ENCODE measurements at regions of chr3 and their contacts with region 1.

Region 1: GRCh38 chr3:71744738-71745137 is 8.9 kb upstream of the GPR27 start:
- DNase-seq: no peak
- H3K4me3 ChIP-seq: no peak overlapping the region
- H3K27ac ChIP-seq: no peak overlapping the region
- H3K4me1 ChIP-seq: no peaks in the 10 kb centered on the region
- H3K27me3 ChIP-seq: peaks cover 0 to 4% (median 0%) of the 10 kb centered on the region in 7 donors
- CTCF ChIP-seq: no peak
- POLR2A ChIP-seq: no peak

Region 2: GRCh38 chr3:71859123-71859519 is 114.4 kb after region 1 on chr3:
- intact Hi-C with region 1: loop called (anchors 10 kb)
- DNase-seq: no peak
- H3K4me3 ChIP-seq: peak overlapping the region in 1 of 8 donors; percentile 37
- H3K27ac ChIP-seq: peak overlapping the region in 7 of 8 donors; percentile 30 to 82 (median 70)
- H3K4me1 ChIP-seq: peaks cover 4 to 24% (median 10%) of the 10 kb centered on the region in 6 donors
- H3K27me3 ChIP-seq: peaks cover 0 to 35% (median 2%) of the 10 kb centered on the region in 7 donors
- CTCF ChIP-seq: peak in 9 of 11 experiments; percentile 28 to 66 (median 49)
- POLR2A ChIP-seq: no peak